ENCODE measurements at regions of chr12 and their contacts with region 1.

Region 1: DNA sequence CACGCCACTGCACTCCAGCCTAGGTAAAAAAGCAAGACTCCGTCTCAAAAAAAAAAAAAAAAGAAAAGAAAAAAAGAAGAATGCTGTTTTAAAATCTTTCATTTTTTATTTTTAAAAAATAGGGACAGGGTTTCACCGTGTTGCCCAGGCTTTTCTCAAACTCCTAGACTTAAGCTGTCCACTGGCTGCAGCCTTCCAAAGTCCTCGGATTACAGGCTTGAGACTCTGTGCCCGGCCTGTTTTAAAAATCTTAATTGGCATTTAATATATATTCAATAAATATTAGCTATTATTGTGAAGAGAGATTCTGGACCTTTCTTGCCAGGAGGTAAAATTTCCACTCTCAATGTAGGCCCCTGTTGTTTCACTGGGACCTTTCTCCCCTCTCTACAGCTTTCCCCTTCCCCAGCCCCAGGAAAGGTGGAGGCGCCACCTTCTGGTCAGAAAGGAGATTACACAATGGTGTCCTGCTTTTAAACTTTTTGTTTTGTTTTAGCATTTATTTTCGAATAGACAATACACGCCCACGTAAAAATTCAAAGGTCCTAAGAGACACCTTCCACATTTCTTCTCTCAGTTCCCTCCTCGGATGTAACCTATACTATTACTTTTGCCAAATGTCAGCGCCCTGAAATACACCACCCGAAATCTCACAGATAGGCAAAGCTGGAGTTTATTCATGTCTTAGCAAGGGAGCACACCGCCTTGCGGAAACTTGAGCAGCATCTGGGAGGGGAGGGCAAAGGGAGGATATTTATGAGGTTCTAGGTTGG is 23.8 kb upstream of the PHC1 start:
- DNase-seq: peak in 1 of 2 experiments; percentile 80
- H3K4me3 ChIP-seq: peak overlapping the region; percentile 21 to 58 (median 32); a peak in 6 of 8 replicates
- H3K27ac ChIP-seq: no peak overlapping the region
- H3K4me1 ChIP-seq: peaks cover 0 to 5% (median 1%) of the 10 kb centered on the region in 4 experiments; a peak in 3 of 7 replicates
- H3K27me3 ChIP-seq: no peaks in the 10 kb centered on the region
- CTCF ChIP-seq: peak; percentile 62 to 65 (median 63)
- EP300 ChIP-seq: no peak
- POLR2A ChIP-seq: no peak
- RAD21 ChIP-seq: peak; percentile 78 to 79

Region 2: GRCh38 chr12:8681041-8681902 is 209.2 kb before region 1 on chr12:
- CTCF ChIA-PET with region 1: interaction called, 19 read pairs
- POLR2A ChIA-PET with region 1: interaction called, 5 read pairs
- DNase-seq: no peak
- H3K4me3 ChIP-seq: peak overlapping the region in 1 of 4 experiments; percentile 35; a peak in 2 of 8 replicates
- H3K27ac ChIP-seq: no peak overlapping the region
- H3K4me1 ChIP-seq: peaks cover 0 to 15% (median 11%) of the 10 kb centered on the region in 4 experiments; a peak in 6 of 7 replicates
- H3K27me3 ChIP-seq: no peaks in the 10 kb centered on the region
- CTCF ChIP-seq: no peak
- EP300 ChIP-seq: no peak
- POLR2A ChIP-seq: no peak
- RAD21 ChIP-seq: no peak

Region 3: DNA sequence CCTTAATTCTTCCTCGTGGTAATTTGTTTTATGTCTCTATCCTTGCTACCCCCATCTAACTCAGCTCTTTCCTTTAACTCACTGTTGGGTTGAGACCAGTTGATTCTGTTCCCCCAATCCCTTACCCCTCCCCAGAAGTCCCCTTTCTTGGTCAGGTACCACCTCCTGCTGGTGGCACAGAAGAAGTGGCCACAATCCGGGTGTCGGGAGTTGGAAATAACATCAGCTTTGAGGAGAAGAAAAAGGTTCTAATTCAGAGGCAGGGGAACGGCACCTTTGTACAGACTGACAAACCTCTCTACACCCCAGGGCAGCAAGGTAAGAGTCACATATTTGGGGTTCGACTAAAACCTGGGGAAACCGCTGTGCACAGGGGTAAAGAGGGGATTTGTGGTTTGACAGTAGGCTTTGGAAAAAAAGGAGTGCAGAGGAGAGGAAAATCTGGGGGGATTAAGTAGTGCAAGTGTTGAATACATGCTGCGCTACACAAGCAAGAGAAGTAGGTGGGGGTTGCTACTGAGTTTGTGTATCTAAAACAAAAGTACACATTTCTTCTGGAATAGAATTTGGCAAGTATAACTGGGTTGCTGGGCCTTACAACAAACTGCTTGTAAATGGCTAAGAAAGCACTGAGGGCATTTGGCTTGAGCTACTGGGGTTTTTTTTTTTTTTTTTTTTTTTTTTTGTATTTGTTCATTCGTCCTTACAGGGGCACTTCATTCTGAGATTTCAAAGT is 66.8 kb before region 1 on chr12:
- CTCF ChIA-PET with region 1: interaction called, 22 read pairs
- POLR2A ChIA-PET with region 1: interaction called, 7 read pairs
- DNase-seq: peak in 1 of 2 experiments; percentile 84
- H3K4me3 ChIP-seq: peak overlapping the region; percentile 13 to 49 (median 26); a peak in 6 of 8 replicates
- H3K27ac ChIP-seq: no peak overlapping the region
- H3K4me1 ChIP-seq: peaks cover 5 to 20% (median 14%) of the 10 kb centered on the region in 4 experiments
- H3K27me3 ChIP-seq: no peaks in the 10 kb centered on the region
- CTCF ChIP-seq: peak; percentile 81 to 93 (median 89)
- EP300 ChIP-seq: no peak
- POLR2A ChIP-seq: no peak
- RAD21 ChIP-seq: peak; percentile 99 to 100

Region 4: DNA sequence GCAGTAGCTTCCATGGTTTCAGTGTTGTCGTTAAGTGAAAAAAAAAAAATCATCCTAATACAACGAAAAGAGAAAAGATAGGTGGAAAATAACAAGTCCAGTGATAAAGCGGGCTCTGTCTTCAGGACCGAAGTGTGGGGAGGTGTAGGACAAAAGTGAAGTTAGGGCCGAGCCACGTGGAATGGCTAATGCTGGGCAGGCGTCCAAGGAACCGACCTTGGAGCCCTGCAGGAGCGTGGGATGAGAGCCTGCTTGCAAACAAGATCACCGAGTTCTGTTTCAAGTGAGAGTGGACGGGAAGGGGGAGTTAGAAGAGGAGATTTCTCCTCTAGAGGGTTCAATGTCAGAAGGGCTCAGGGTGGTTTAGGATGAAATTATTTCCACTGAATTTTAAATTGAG is 45.8 kb before region 1 on chr12:
- CTCF ChIA-PET with region 1: interaction called, 13 read pairs
- POLR2A ChIA-PET with region 1: no interaction called
- DNase-seq: no peak
- H3K4me3 ChIP-seq: no peak overlapping the region
- H3K27ac ChIP-seq: no peak overlapping the region
- H3K4me1 ChIP-seq: no peaks in the 10 kb centered on the region; a peak in 1 of 7 replicates
- H3K27me3 ChIP-seq: no peaks in the 10 kb centered on the region
- CTCF ChIP-seq: no peak
- EP300 ChIP-seq: no peak
- POLR2A ChIP-seq: no peak
- RAD21 ChIP-seq: no peak

Region 5: GRCh38 chr12:8876887-8877286 is 13.6 kb before region 1 on chr12:
- CTCF ChIA-PET with region 1: interaction called, 29 read pairs
- POLR2A ChIA-PET with region 1: interaction called, 3 read pairs
- DNase-seq: no peak
- H3K4me3 ChIP-seq: no peak overlapping the region
- H3K27ac ChIP-seq: no peak overlapping the region
- H3K4me1 ChIP-seq: peaks cover 0 to 2% (median under 1%) of the 10 kb centered on the region in 4 experiments; a peak in 3 of 7 replicates
- H3K27me3 ChIP-seq: no peaks in the 10 kb centered on the region
- CTCF ChIP-seq: no peak
- EP300 ChIP-seq: no peak
- POLR2A ChIP-seq: no peak
- RAD21 ChIP-seq: no peak

Region 6: GRCh38 chr12:8914716-8915526 is 24.4 kb after region 1 on chr12:
- CTCF ChIA-PET with region 1: interaction called, 8 read pairs
- POLR2A ChIA-PET with region 1: interaction called, 28 read pairs
- DNase-seq: peak in 1 of 2 experiments; percentile 76
- H3K4me3 ChIP-seq: peak overlapping the region; percentile 91 to 99 (median 98)
- H3K27ac ChIP-seq: peak overlapping the region; percentile 65; the same call in 1 of the 2 replicates
- H3K4me1 ChIP-seq: peaks cover 0 to 33% (median 11%) of the 10 kb centered on the region in 4 experiments; a peak in 5 of 7 replicates
- H3K27me3 ChIP-seq: no peaks in the 10 kb centered on the region
- CTCF ChIP-seq: no peak
- EP300 ChIP-seq: no peak
- POLR2A ChIP-seq: 0 out of 3 replicates have a peak, but pooled peaks of 1 of the 2 experiments have one; percentile 42
- RAD21 ChIP-seq: no peak

Region 7: GRCh38 chr12:8989413-8989812 is 98.9 kb after region 1 on chr12 and contains the start of gene KLRG1:
- CTCF ChIA-PET with region 1: no interaction called
- POLR2A ChIA-PET with region 1: no interaction called
- DNase-seq: no peak
- H3K4me3 ChIP-seq: no peak within 1 kb of the TSS
- H3K27ac ChIP-seq: no peak within 1 kb of the TSS
- H3K4me1 ChIP-seq: no peaks in the 10 kb centered on the region
- H3K27me3 ChIP-seq: no peaks in the 10 kb centered on the region
- CTCF ChIP-seq: no peak
- EP300 ChIP-seq: no peak
- POLR2A ChIP-seq: no peak
- RAD21 ChIP-seq: no peak
- total RNA-seq, gene KLRG1: 7.9 and 9.1 TPM in 2 replicates